Mammary epithelial cell (primary cell): ENCODE measurements at regions of chr7 and their contacts with region 1.

Region 1: GRCh38 chr7:141975806-141976523 is 2.4 kb upstream of the TAS2R38 start:
- DNase-seq: peak; percentile 78
- H3K4me3 ChIP-seq: peak overlapping the region in 2 of 3 experiments; percentile 8 to 29
- H3K27ac ChIP-seq: peak overlapping the region; percentile 13
- H3K4me1 ChIP-seq: peaks cover 13% of the 10 kb centered on the region
- H3K27me3 ChIP-seq: no peaks in the 10 kb centered on the region
- CTCF ChIP-seq: peak; percentile 82 to 96

Region 2: DNA sequence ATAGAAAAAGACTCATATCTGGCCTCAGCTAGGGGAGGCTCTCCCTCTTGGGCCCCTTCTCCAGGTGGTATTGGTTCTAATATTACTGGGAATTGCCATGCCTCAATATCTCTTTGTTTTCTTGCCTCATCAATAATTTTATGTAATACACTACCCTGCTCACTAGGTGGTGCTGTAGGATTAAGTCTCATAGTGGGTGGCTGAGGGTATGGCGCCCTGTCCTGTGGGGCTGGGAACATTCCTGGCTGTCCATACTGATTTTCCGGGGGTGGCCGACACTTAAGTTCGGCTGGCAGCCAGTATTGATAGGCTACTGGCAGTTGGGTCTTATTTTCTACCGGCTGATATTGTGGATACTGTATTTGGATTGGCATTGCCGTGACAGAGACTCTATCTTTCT is 221.0 kb before region 1 on chr7:
- CTCF ChIA-PET with region 1: no interaction called
- dilution Hi-C with region 1: no loop called
- in situ Hi-C with region 1: no loop called
- intact Hi-C with region 1: loop called (anchors 1 kb)
- DNase-seq: peak; percentile 11
- H3K4me3 ChIP-seq: no peak overlapping the region
- H3K27ac ChIP-seq: no peak overlapping the region
- H3K4me1 ChIP-seq: no peaks in the 10 kb centered on the region
- H3K27me3 ChIP-seq: no peaks in the 10 kb centered on the region
- CTCF ChIP-seq: peak; percentile 42 to 62

Region 3: DNA sequence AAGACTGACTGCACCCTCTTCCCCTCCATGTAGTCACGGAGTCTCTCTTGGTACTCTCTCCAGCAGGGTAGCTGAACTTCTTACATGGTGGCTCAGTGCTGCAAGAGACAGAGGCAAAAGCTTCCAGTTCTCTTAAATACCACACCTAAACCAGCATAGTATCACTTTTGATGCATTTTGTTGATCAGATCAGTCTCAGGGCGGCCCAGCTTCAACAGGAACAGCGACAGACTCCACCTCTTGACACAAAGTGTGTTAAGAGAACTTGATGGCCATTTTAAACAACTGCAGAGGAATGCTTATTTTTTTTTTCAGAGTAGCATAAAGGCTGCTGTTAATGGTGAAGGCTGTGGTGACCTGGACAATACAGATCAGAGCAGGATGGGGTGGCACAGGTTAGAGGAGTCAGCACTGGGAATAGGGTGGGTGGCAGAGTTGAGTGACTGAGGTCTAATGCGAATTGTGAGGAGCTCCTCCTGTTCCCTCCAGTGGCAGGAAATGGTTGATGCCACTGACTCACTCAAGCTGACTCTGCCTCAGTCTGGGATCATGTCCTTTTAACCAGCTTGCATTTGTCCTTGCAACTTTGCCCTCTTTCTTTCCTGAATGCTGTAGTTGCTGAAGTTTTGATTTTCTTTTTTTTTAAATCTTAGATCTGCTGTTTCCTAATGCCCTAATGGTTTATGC is 37.0 kb after region 1 on chr7:
- CTCF ChIA-PET with region 1: interaction called, 3 read pairs
- dilution Hi-C with region 1: loop called (anchors 5 kb)
- in situ Hi-C with region 1: no loop called
- intact Hi-C with region 1: no loop called
- DNase-seq: peak; percentile 47
- H3K4me3 ChIP-seq: no peak overlapping the region
- H3K27ac ChIP-seq: no peak overlapping the region
- H3K4me1 ChIP-seq: peaks cover 15% of the 10 kb centered on the region
- H3K27me3 ChIP-seq: no peaks in the 10 kb centered on the region
- CTCF ChIP-seq: peak; percentile 20 to 44

Region 4: DNA sequence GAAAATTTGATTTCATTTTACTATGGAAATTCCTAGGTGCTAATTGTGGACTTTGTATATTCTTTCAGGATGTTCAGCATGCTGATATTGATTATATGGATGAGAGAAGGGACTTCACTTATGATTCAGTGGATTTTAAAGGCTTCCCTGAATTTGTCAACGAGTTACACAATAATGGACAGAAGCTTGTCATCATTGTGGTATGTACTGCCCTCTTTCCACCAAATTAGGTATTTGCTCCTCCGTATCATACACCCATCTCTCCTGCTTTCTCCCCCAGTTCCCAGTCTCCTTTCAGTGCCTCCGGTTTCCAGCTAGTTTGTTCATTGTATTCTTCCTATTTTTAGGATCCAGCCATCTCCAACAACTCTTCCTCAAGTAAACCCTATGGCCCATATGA is 54.3 kb after region 1 on chr7:
- CTCF ChIA-PET with region 1: interaction called, 15 read pairs
- dilution Hi-C with region 1: no loop called
- in situ Hi-C with region 1: no loop called
- intact Hi-C with region 1: loop called (anchors 1 kb)
- DNase-seq: peak; percentile 70
- H3K4me3 ChIP-seq: no peak overlapping the region
- H3K27ac ChIP-seq: peak overlapping the region; percentile 17
- H3K4me1 ChIP-seq: peaks cover 37% of the 10 kb centered on the region
- H3K27me3 ChIP-seq: no peaks in the 10 kb centered on the region
- CTCF ChIP-seq: peak; percentile 25 to 46

Region 5: GRCh38 chr7:142188846-142189245 is 212.9 kb after region 1 on chr7:
- CTCF ChIA-PET with region 1: interaction called, 7 read pairs
- dilution Hi-C with region 1: no loop called
- in situ Hi-C with region 1: loop called (anchors 5 to 10 kb)
- intact Hi-C with region 1: loop called (anchors 1 kb)
- DNase-seq: peak; percentile 16
- H3K4me3 ChIP-seq: no peak overlapping the region
- H3K27ac ChIP-seq: no peak overlapping the region
- H3K4me1 ChIP-seq: no peaks in the 10 kb centered on the region
- H3K27me3 ChIP-seq: no peaks in the 10 kb centered on the region
- CTCF ChIP-seq: peak; percentile 27 to 53